B cell (primary cell): ENCODE measurements at regions of chr20 and their contacts with region 1.

Region 1: DNA sequence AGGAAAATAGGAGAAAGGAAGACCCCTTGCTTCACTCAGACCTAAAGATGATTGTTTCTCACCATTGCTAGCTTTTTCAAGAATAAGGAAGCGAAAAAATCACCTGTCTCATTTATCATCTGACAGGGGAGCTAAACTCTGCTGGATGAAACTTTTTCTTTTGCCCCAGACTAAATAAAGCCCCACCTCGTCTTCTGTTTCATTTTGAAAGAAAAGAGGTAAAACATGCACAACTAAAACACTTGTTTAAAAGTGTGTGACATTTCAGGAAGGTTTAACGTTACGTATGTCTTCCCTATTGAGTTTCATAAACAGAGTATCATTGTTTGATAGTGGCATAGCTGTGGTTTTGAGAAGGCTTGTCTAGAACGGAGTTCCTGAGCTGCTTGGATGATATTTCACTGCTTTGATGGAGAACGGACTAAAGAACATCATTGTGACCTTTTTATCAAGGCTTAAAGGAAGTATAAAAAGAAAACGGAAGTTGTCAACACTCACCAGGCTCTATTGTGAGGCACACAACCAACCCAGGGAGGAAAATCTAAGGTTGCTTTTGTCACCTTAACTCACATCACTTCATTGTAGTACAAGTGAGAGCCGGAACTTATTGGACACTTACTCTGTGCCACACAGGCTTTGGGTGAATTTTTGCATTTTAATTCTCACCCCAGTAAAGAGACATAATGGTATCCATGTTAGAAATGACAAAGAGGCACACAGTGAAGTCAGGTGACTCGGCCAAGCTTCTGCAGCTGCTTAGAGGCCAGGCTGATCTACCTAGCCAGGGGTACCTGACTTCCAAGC is 29.5 kb downstream of the TSHZ2 start:
- DNase-seq: peak; percentile 63
- ATAC-seq: peak; percentile 67
- H3K4me3 ChIP-seq: peak overlapping the region in 3 of 5 experiments; percentile 8 to 56 (median 44)
- H3K4me3 Mint-ChIP-seq: peak overlapping the region; percentile 86
- H3K27ac ChIP-seq: peak overlapping the region; percentile 75 to 84
- H3K27ac Mint-ChIP-seq: peak overlapping the region; percentile 95
- H3K4me1 ChIP-seq: peaks cover 16 to 28% of the 10 kb centered on the region in 2 donors
- H3K4me1 Mint-ChIP-seq: peaks cover 26% of the 10 kb centered on the region
- H3K27me3 ChIP-seq: no peaks in the 10 kb centered on the region
- H3K27me3 Mint-ChIP-seq: peaks cover 5% of the 10 kb centered on the region
- CTCF ChIP-seq: no peak

Region 2: GRCh38 chr20:52852714-52853113 is 149.0 kb before region 1 on chr20:
- CTCF ChIA-PET with region 1: no interaction called
- POLR2A ChIA-PET with region 1: no interaction called
- intact Hi-C with region 1: no loop called
- DNase-seq: no peak
- ATAC-seq: no peak
- H3K4me3 ChIP-seq: no peak overlapping the region
- H3K4me3 Mint-ChIP-seq: no peak overlapping the region
- H3K27ac ChIP-seq: no peak overlapping the region
- H3K27ac Mint-ChIP-seq: no peak overlapping the region
- H3K4me1 ChIP-seq: no peaks in the 10 kb centered on the region
- H3K4me1 Mint-ChIP-seq: no peaks in the 10 kb centered on the region
- H3K27me3 ChIP-seq: no peaks in the 10 kb centered on the region
- H3K27me3 Mint-ChIP-seq: peaks cover 5% of the 10 kb centered on the region
- CTCF ChIP-seq: no peak

Region 3: DNA sequence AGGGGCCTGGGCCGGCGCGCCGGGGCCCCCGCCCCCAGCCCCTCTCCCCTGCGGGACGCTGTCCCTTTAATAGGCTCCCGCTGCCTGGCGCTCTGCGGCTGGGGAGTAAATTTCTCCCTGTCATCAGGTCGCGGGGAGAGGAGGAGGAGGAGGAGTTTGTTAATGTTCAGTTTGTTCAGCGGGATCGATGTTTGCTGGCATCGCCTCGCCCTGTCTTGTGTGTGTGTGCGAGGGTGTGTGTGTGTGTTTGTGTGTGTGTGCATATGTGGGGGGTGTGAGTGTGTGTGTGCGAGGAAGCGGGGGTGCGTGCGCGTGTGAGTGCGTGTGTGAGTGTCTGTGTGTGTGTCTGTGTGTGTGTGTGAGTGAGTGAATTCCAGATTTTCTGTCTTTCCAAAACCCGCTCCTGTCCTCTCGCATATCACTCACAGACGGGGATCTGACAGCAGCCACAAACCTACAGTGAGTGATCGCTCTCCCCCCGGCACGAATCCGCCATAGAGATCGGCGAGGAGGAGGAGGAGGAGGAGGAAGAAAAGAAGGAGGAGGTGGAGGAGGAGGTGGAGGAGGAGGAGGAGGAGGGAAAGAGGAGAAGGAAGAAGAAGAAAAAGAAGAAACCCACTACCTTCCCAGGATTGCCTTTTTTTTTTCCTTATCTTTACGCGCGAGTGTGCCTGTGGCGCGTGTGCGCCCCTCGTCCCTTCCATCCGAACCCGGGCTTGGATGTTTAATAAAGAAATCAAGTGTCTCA is 29.3 kb before region 1 on chr20 and contains the start of gene TSHZ2:
- CTCF ChIA-PET with region 1: interaction called, 6 read pairs
- POLR2A ChIA-PET with region 1: interaction called, 8 read pairs
- intact Hi-C with region 1: loop called (anchors 2 kb)
- DNase-seq: peak; percentile 38
- ATAC-seq: peak; percentile 29
- H3K4me3 ChIP-seq: peak within 1 kb of the TSS in 4 of 5 experiments; percentile 30 to 60 (median 52)
- H3K4me3 Mint-ChIP-seq: peak within 1 kb of the TSS; percentile 90
- H3K27ac ChIP-seq: no peak within 1 kb of the TSS
- H3K27ac Mint-ChIP-seq: peak within 1 kb of the TSS; percentile 86
- H3K4me1 ChIP-seq: peaks cover 2 to 5% of the 10 kb centered on the region in 2 donors
- H3K4me1 Mint-ChIP-seq: peaks cover 25% of the 10 kb centered on the region
- H3K27me3 ChIP-seq: peaks cover 0 to 19% (median 11%) of the 10 kb centered on the region in 4 experiments
- H3K27me3 Mint-ChIP-seq: peaks cover 61% of the 10 kb centered on the region
- CTCF ChIP-seq: no peak
- total RNA-seq, gene TSHZ2: 5.7 and 7.7 TPM in 2 replicates

Region 4: GRCh38 chr20:53157443-53158408 is 156.0 kb after region 1 on chr20:
- CTCF ChIA-PET with region 1: no interaction called
- POLR2A ChIA-PET with region 1: no interaction called
- intact Hi-C with region 1: loop called (anchors 10 kb)
- DNase-seq: peak; percentile 52
- ATAC-seq: peak; percentile 67
- H3K4me3 ChIP-seq: no peak overlapping the region
- H3K4me3 Mint-ChIP-seq: peak overlapping the region; percentile 57
- H3K27ac ChIP-seq: peak overlapping the region; percentile 44 to 51
- H3K27ac Mint-ChIP-seq: peak overlapping the region; percentile 92
- H3K4me1 ChIP-seq: peaks cover 3 to 19% of the 10 kb centered on the region in 2 donors
- H3K4me1 Mint-ChIP-seq: peaks cover 40% of the 10 kb centered on the region
- H3K27me3 ChIP-seq: no peaks in the 10 kb centered on the region
- H3K27me3 Mint-ChIP-seq: peaks cover 6% of the 10 kb centered on the region
- CTCF ChIP-seq: peak; percentile 47

Region 5: DNA sequence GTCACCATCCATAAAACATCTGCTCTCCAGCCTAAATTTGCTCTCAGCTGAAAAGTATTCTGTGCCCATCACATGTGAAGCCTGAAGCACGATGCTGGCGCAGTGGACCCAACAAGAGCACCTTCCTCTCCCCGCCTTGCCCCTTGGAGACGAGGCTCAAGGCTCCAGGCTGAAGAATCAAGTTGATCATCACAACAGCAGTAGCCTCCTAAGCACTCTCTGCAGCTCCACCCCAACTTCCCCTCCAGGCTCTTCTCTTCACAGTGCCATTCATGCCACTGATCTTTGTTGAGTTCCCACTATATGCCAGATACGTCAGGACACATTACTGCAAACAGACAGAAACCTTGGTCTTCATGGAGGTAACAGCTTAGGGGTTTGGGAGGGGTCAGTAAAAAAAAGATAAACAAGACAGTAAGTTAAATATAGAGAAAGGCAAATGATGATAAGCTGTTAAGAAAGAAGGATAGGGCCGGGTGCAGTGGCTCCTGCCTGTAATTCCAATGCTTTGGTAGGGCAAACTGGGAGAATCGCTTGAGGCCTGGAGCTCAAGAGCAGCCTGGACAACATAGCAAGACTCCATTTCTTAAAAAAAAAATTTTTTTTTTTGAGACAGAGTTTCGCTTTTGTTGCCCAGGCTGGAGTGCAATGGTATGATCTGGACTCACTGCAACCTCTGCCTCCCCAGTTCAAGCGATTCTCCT is 633.7 kb after region 1 on chr20:
- CTCF ChIA-PET with region 1: no interaction called
- POLR2A ChIA-PET with region 1: no interaction called
- intact Hi-C with region 1: no loop called
- DNase-seq: no peak
- ATAC-seq: no peak
- H3K4me3 ChIP-seq: no peak overlapping the region
- H3K4me3 Mint-ChIP-seq: peak overlapping the region; percentile 49
- H3K27ac ChIP-seq: peak overlapping the region; percentile 7 to 83
- H3K27ac Mint-ChIP-seq: peak overlapping the region; percentile 79
- H3K4me1 ChIP-seq: peaks cover 33 to 34% of the 10 kb centered on the region in 2 donors
- H3K4me1 Mint-ChIP-seq: peaks cover 36% of the 10 kb centered on the region
- H3K27me3 ChIP-seq: no peaks in the 10 kb centered on the region
- H3K27me3 Mint-ChIP-seq: no peaks in the 10 kb centered on the region
- CTCF ChIP-seq: no peak